CD8-positive, alpha-beta memory T cell (primary cell): ENCODE measurements at regions of chr16 and their contacts with region 1.

Region 1: DNA sequence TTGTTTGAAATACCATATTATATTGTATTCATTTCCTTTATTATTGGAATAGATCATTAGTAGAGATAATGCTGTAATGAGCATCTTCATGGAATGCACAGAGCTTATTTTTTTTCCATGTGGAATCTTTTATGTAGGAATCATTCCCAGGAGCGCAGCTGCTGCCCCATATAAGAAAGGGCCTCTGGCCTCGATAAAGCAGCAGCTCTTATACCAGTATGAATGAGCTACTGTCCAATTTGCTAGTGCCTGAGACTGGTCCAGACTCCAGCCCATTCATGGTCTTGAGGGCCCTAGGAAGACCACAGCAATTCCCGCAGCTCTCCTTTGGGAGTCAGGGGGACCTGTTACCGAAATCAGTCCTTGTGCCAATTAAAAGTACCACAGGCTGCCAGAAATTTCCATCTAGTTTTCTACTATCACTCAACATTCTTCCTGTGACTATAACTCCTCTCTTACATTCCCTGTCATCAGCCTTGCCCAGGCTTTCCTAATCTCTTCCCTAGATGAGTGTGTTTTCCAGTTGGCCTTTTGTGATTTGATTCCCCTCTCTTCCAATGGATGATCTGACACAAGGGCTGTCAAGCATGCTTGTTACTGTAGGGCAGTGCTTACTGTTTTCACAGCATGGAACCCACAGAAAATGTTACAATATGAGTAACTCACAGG is 1.9 kb downstream of the ZNF843 start:
- DNase-seq: no peak
- H3K4me3 ChIP-seq: no peak overlapping the region
- H3K4me3 Mint-ChIP-seq: peak overlapping the region in 3 of 7 donors; percentile 34 to 84 (median 40)
- H3K27ac ChIP-seq: no peak overlapping the region
- H3K27ac Mint-ChIP-seq: peak overlapping the region in 1 of 8 donors; percentile 2
- H3K4me1 ChIP-seq: no peaks in the 10 kb centered on the region
- H3K4me1 Mint-ChIP-seq: peaks cover 12 to 19% (median 18%) of the 10 kb centered on the region in 3 donors
- H3K27me3 ChIP-seq: no peaks in the 10 kb centered on the region
- H3K27me3 Mint-ChIP-seq: peaks cover 0 to 3% of the 10 kb centered on the region in 2 donors

Region 2: DNA sequence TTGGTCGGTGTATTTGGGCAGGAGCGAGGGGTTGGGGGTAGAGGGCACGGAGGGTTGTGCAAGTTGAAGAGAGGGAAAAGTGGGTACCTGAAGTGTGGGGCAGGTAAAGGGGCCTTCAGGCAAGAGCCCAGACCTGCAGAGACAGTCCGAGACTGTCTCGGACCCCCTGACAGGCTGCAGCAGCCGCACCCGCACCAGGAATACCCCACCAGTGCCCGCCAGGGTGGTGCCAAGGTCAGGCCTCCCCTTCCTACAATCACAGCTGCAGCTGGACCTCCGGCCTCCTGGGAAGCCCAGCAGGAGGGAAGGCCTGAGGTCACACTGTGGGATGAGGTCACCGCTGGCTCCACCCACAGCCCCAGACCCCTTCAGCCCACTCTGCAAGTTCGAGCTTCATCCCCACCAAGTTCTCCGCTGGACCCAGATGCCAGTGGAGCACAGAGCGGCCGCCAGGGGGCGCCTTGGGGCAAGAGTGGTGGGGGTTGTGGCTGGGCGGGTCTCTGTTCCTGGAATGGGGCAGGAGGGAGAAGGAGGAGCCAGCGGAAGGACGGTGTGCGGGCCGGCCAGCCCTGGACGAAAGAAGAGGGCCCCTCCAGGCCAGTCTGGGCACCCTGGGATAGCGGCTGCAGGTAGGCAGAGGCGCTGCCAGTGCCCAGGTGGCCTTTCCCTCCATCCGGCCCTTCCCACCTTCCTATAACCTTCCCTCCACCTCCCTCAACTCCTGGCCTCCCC is 455.8 kb before region 1 on chr16 and contains the start of gene HSD3B7:
- CTCF ChIA-PET with region 1: interaction called, 17 read pairs
- POLR2A ChIA-PET with region 1: no interaction called
- DNase-seq: peak; percentile 63 to 84 (median 75)
- H3K4me3 ChIP-seq: no peak within 1 kb of the TSS
- H3K4me3 Mint-ChIP-seq: no peak within 1 kb of the TSS
- H3K27ac ChIP-seq: no peak within 1 kb of the TSS
- H3K27ac Mint-ChIP-seq: no peak within 1 kb of the TSS
- H3K4me1 ChIP-seq: no peaks in the 10 kb centered on the region
- H3K4me1 Mint-ChIP-seq: peaks cover 0 to 6% (median 0%) of the 10 kb centered on the region in 3 donors
- H3K27me3 ChIP-seq: no peaks in the 10 kb centered on the region
- H3K27me3 Mint-ChIP-seq: no peaks in the 10 kb centered on the region
- total RNA-seq, gene HSD3B7: 1.6 to 2.1 TPM

Region 3: DNA sequence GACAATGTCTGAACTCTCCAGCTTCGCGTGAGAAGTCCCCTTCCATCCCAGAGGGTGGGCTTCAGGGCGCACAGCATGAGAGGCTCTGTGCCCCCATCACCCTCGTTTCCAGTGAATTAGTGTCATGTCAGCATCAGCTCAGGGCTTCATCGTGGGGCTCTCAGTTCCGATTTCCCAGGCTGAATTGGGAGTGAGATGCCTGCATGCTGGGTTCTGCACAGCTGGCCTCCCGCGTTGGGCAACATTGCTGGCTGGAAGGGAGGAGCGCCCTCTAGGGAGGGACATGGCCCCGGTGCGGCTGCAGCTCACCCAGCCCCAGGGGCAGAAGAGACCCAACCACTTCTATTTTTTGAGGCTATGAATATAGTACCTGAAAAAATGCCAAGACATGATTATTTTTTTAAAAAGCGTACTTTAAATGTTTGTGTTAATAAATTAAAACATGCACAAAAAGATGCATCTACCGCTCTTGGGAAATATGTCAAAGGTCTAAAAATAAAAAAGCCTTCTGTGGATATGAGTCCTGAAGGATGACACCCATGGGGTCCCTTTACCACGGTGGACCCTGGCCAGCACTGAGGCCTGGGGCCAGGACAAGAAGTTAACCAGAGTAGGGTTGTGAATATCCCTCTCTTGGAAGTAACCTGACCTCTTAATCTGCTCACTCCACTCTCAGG is 58.0 kb before region 1 on chr16:
- CTCF ChIA-PET with region 1: interaction called, 4 read pairs
- POLR2A ChIA-PET with region 1: interaction called, 15 read pairs
- DNase-seq: peak; percentile 37 to 75 (median 58)
- H3K4me3 ChIP-seq: no peak overlapping the region
- H3K4me3 Mint-ChIP-seq: no peak overlapping the region
- H3K27ac ChIP-seq: no peak overlapping the region
- H3K27ac Mint-ChIP-seq: no peak overlapping the region
- H3K4me1 ChIP-seq: peaks cover under 1% of the 10 kb centered on the region
- H3K4me1 Mint-ChIP-seq: peaks cover 13 to 16% (median 16%) of the 10 kb centered on the region in 3 donors
- H3K27me3 ChIP-seq: no peaks in the 10 kb centered on the region
- H3K27me3 Mint-ChIP-seq: peaks cover under 1 to 5% of the 10 kb centered on the region in 2 donors

Region 4: DNA sequence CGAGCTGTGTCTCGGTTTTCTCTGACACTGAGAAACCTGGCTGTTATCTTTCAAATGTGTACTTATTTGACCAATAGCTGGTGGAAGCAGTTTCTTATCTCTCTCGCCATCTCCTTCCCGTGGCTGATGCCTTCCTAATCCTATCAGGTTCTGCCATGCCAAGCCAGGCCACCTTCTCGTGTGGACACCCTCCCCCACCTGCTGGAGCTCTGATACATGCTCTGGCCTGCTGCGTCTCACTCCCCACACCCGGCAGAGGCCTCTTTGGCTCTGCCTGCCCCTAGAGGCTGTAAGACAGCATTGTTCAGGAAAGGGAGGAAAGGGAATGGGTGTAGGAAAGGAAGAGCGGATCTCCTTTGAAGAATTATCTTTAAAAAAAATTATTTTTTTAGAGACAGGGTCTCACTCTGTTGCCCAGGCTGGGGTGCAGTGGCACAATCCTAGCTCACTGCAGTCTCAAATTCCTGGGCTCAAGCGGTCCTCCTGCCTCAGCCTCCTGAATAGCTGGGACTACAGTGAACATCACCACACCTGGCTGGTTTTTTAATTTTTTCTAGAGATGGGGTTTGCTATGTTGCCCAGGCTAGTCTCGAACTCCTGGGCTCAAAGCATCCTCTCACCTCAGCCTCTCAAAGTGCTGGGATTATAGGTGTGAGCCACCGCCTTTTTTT is 11.2 kb after region 1 on chr16:
- CTCF ChIA-PET with region 1: interaction called, 17 read pairs
- POLR2A ChIA-PET with region 1: no interaction called
- DNase-seq: no peak
- H3K4me3 ChIP-seq: no peak overlapping the region
- H3K4me3 Mint-ChIP-seq: no peak overlapping the region
- H3K27ac ChIP-seq: no peak overlapping the region
- H3K27ac Mint-ChIP-seq: peak overlapping the region in 5 of 8 donors; percentile 19 to 95 (median 54)
- H3K4me1 ChIP-seq: peaks cover 16% of the 10 kb centered on the region
- H3K4me1 Mint-ChIP-seq: peaks cover 25 to 41% (median 39%) of the 10 kb centered on the region in 3 donors
- H3K27me3 ChIP-seq: no peaks in the 10 kb centered on the region
- H3K27me3 Mint-ChIP-seq: no peaks in the 10 kb centered on the region